Sciatic nerve (tissue), 2 donors: ENCODE measurements at regions of chr6 and their contacts with region 1.

Region 1: DNA sequence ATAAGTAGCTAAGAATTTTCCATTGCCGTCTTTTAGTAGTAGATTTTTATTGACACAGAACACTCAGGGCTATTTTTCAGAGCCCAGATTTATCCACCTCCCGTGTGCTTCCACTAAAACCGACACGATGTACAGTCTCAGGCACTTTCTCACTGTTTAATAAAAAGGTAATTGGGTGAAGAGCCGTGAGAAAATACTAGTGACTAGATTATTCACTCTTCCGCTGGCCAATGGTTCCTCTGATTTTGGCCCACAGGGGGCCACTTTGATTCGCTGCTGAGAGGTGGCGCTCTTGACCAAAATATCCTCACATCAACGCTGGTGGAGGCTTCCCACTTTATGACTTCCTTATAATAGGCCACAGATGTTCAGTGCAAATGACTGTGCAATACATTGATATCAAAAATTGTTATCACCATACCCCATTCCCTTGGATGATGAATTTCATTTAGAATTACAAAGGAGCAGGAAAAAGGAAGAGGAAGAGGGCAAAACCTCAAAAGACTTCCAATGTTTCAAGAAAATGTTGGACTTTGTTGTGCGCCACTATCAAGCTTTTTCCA is 12.3 kb upstream of the HDDC2 start:
- DNase-seq: peak; percentile 76
- ATAC-seq: peak; percentile 93

Region 2: DNA sequence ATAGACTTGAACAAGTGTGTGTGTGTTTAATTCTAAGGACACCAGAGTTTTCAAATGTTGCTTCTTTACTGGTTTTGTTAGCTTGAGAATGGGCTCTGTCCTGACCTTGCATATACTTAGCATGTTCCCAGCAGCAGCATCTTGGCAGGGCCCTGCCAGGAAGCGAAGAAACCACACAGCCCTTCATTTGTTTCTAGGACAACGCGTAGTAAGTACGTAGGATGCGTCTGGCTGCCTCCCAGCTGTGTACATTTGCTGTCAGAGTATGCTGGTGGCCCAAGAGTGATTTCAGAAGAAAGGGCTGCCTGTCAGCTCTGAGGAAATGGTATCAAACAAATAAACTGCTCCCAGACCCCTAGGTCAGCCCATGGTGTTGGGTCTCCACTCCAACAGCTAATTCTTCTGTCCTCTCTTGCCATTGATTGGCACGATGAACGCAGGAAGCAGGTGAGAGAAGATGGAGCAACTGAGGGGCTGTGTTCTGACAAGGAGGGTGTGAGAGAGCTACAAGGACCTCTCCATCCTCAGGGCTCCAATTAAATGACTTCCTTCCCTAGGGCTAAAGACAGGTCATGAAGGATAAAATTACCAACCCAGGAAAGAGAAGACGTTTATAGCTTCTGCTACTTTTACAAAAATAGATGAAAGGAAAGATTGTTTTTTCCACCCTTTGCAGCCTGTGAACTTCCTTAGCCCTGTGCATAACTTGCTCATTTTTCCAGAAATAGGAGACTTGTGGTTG is 43.6 kb after region 1 on chr6:
- intact Hi-C with region 1: no loop called
- DNase-seq: peak; percentile 57
- ATAC-seq: peak; percentile 57

Region 3: GRCh38 chr6:125753218-125753936 is 439.3 kb after region 1 on chr6:
- intact Hi-C with region 1: loop called (anchors 2 kb)
- DNase-seq: no peak
- ATAC-seq: no peak

Region 4: GRCh38 chr6:125765944-125766343 is 451.8 kb after region 1 on chr6:
- intact Hi-C with region 1: loop called (anchors 5 kb)
- DNase-seq: no peak
- ATAC-seq: no peak